B cell (primary cell): ENCODE measurements at regions of chr14 and their contacts with region 1.

Region 1: GRCh38 chr14:103562429-103563225 is at the starts of genes BAG5 and COA8:
- DNase-seq: peak; percentile 95
- ATAC-seq: peak; percentile 80
- H3K4me3 ChIP-seq: peak within 1 kb of the TSS; percentile 65 to 94 (median 92)
- H3K4me3 Mint-ChIP-seq: peak within 1 kb of the TSS; percentile 89
- H3K27ac ChIP-seq: peak within 1 kb of the TSS; percentile 68 to 92
- H3K27ac Mint-ChIP-seq: peak within 1 kb of the TSS; percentile 91
- H3K4me1 ChIP-seq: peaks cover 27 to 30% of the 10 kb centered on the region in 2 donors
- H3K4me1 Mint-ChIP-seq: peaks cover 53% of the 10 kb centered on the region
- H3K27me3 ChIP-seq: no peaks in the 10 kb centered on the region
- H3K27me3 Mint-ChIP-seq: no peaks in the 10 kb centered on the region
- CTCF ChIP-seq: no peak
- total RNA-seq, gene BAG5: 31.6 and 33.3 TPM in 2 replicates
- total RNA-seq, gene COA8: 24.9 and 31.3 TPM in 2 replicates

Region 2: GRCh38 chr14:103333754-103334643 is 228.6 kb before region 1 on chr14 and contains the start of gene EIF5:
- CTCF ChIA-PET with region 1: no interaction called
- POLR2A ChIA-PET with region 1: interaction called, 3 read pairs
- intact Hi-C with region 1: loop called (anchors 10 kb)
- DNase-seq: peak; percentile 100
- ATAC-seq: peak; percentile 85
- H3K4me3 ChIP-seq: peak within 1 kb of the TSS; percentile 78 to 100 (median 94)
- H3K4me3 Mint-ChIP-seq: peak within 1 kb of the TSS; percentile 96
- H3K27ac ChIP-seq: peak within 1 kb of the TSS; percentile 98 to 99
- H3K27ac Mint-ChIP-seq: peak within 1 kb of the TSS; percentile 100
- H3K4me1 ChIP-seq: peaks cover 17 to 25% of the 10 kb centered on the region in 2 donors
- H3K4me1 Mint-ChIP-seq: peaks cover 42% of the 10 kb centered on the region
- H3K27me3 ChIP-seq: no peaks in the 10 kb centered on the region
- H3K27me3 Mint-ChIP-seq: no peaks in the 10 kb centered on the region
- CTCF ChIP-seq: peak; percentile 51
- total RNA-seq, gene EIF5: 314 TPM in 2 replicates

Region 3: DNA sequence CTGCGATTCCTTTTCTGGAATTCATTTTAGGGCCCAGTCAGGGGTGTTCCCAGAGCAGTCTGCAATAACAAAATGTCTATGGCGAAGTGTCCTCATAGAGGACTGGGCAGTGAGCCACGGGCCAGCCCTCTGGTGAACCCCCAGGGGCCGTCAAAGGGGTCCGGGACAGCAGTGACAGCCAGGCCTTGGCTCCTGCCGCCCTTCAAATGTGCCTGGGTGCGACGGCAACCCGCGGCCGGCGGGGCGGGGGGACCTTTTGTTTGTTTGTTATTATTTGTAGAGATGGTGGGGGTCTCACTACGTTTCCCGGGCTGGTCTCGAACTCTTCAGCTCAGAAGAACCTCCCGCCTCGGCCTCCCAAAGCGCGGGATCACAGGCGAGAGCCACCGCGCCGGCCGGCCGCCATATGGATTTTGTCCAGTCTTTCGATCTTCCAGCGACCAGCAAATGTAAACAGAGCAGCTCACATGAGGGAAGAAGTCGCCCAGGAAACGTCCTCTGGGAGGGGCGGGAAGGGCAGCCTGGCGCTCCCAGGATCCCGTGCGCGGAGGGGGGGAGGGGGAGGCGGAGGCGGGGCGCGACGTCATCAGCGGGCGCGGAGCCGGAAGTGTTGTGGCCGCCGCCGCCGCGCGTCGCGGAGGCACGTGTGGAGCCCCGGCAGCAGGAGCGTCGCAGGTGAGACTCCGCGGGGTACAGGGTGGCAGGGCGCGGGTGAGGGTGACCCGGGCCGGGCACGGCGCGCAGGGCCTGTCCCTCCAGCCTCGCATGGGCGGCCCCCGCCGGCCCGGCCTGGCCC is 33.8 kb before region 1 on chr14 and contains the start of gene TRMT61A:
- CTCF ChIA-PET with region 1: interaction called, 5 read pairs
- POLR2A ChIA-PET with region 1: interaction called, 4 read pairs
- intact Hi-C with region 1: loop called (anchors 2 kb)
- DNase-seq: peak; percentile 85
- ATAC-seq: peak; percentile 42
- H3K4me3 ChIP-seq: peak within 1 kb of the TSS; percentile 53 to 94 (median 86)
- H3K4me3 Mint-ChIP-seq: peak within 1 kb of the TSS; percentile 88
- H3K27ac ChIP-seq: peak within 1 kb of the TSS; percentile 73 to 84
- H3K27ac Mint-ChIP-seq: peak within 1 kb of the TSS; percentile 96
- H3K4me1 ChIP-seq: peaks cover 33 to 49% of the 10 kb centered on the region in 2 donors
- H3K4me1 Mint-ChIP-seq: peaks cover 50% of the 10 kb centered on the region
- H3K27me3 ChIP-seq: peaks cover 0 to under 1% (median under 1%) of the 10 kb centered on the region in 4 experiments
- H3K27me3 Mint-ChIP-seq: no peaks in the 10 kb centered on the region
- CTCF ChIP-seq: no peak
- total RNA-seq, gene TRMT61A: 9.5 and 12.3 TPM in 2 replicates

Region 4: DNA sequence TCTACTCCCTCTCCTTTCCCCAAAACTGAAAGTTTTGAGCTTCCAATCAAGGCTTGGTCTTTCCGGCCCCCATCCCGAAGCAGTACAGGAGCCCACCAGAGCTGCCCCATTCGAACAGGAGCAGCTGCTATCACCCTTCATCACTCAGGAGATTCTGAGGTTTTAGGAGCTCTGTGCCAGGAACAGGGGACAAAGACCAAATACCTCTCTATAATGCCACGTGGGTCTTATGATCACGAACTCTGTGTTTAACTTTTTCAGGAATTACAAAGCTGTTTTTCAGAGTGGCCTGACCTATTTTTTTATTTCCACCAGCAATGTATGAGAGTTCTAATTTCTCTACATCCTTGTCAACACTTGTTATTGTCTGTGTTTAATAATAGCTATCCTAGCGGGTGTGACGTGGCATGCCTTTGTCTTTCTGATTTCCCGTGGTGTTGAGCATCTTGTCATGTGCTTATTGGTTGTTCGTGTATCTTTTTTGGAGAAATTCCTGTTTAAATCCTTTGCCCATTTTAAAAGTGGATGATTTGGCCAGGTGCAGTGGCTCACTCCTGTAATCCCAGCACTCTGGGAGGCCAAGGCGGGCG is 21.8 kb after region 1 on chr14:
- CTCF ChIA-PET with region 1: no interaction called
- POLR2A ChIA-PET with region 1: no interaction called
- intact Hi-C with region 1: no loop called
- DNase-seq: no peak
- ATAC-seq: no peak
- H3K4me3 ChIP-seq: no peak overlapping the region
- H3K4me3 Mint-ChIP-seq: no peak overlapping the region
- H3K27ac ChIP-seq: no peak overlapping the region
- H3K27ac Mint-ChIP-seq: no peak overlapping the region
- H3K4me1 ChIP-seq: no peaks in the 10 kb centered on the region
- H3K4me1 Mint-ChIP-seq: no peaks in the 10 kb centered on the region
- H3K27me3 ChIP-seq: no peaks in the 10 kb centered on the region
- H3K27me3 Mint-ChIP-seq: no peaks in the 10 kb centered on the region
- CTCF ChIP-seq: no peak

Region 5: GRCh38 chr14:103628684-103629502 is 66.3 kb after region 1 on chr14 and contains the start of gene KLC1:
- CTCF ChIA-PET with region 1: no interaction called
- POLR2A ChIA-PET with region 1: no interaction called
- intact Hi-C with region 1: loop called (anchors 1 kb)
- DNase-seq: peak; percentile 90
- ATAC-seq: peak; percentile 74
- H3K4me3 ChIP-seq: peak within 1 kb of the TSS; percentile 66 to 86 (median 75)
- H3K4me3 Mint-ChIP-seq: peak within 1 kb of the TSS; percentile 88
- H3K27ac ChIP-seq: peak within 1 kb of the TSS; percentile 73 to 83
- H3K27ac Mint-ChIP-seq: peak within 1 kb of the TSS; percentile 95
- H3K4me1 ChIP-seq: peaks cover 41 to 46% of the 10 kb centered on the region in 2 donors
- H3K4me1 Mint-ChIP-seq: peaks cover 55% of the 10 kb centered on the region
- H3K27me3 ChIP-seq: no peaks in the 10 kb centered on the region
- H3K27me3 Mint-ChIP-seq: no peaks in the 10 kb centered on the region
- CTCF ChIP-seq: no peak
- total RNA-seq, gene KLC1: 243 and 249 TPM in 2 replicates

Region 6: GRCh38 chr14:103847451-103848188 is 285.0 kb after region 1 on chr14 and contains the start of gene PPP1R13B:
- CTCF ChIA-PET with region 1: no interaction called
- POLR2A ChIA-PET with region 1: no interaction called
- intact Hi-C with region 1: loop called (anchors 2 kb)
- DNase-seq: peak; percentile 95
- ATAC-seq: peak; percentile 97
- H3K4me3 ChIP-seq: peak within 1 kb of the TSS; percentile 44 to 73 (median 60)
- H3K4me3 Mint-ChIP-seq: peak within 1 kb of the TSS; percentile 91
- H3K27ac ChIP-seq: peak within 1 kb of the TSS in 1 of 2 donors; percentile 59
- H3K27ac Mint-ChIP-seq: peak within 1 kb of the TSS; percentile 83
- H3K4me1 ChIP-seq: peaks cover 10 to 14% of the 10 kb centered on the region in 2 donors
- H3K4me1 Mint-ChIP-seq: peaks cover 16% of the 10 kb centered on the region
- H3K27me3 ChIP-seq: no peaks in the 10 kb centered on the region
- H3K27me3 Mint-ChIP-seq: no peaks in the 10 kb centered on the region
- CTCF ChIP-seq: no peak
- total RNA-seq, gene PPP1R13B: 27.7 and 38.6 TPM in 2 replicates